Activated T-helper 2 cell treated with anti-CD3 and anti-CD28 coated beads, Interferon-gamma antibody, Interleukin-2, Interleukin-4, amounts not matched to agents 10 μg/mL and 5 μg/mL and 100 μg/mL, durations not matched to agents 14 hours and 24 hours and 36 hours (primary cell): ENCODE measurements at regions of chr2 and their contacts with region 1.

Region 1: GRCh38 chr2:76187415-76187814 is 476.7 kb upstream of the GCFC2 start:
- DNase-seq: no peak
- H3K4me3 Mint-ChIP-seq: no peak overlapping the region
- H3K27ac Mint-ChIP-seq: no peak overlapping the region
- H3K4me1 Mint-ChIP-seq: no peaks in the 10 kb centered on the region
- H3K27me3 Mint-ChIP-seq: no peaks in the 10 kb centered on the region

Region 2: GRCh38 chr2:76169276-76170008 is 18.0 kb before region 1 on chr2:
- intact Hi-C with region 1: no loop called
- DNase-seq: no peak
- H3K4me3 Mint-ChIP-seq: no peak overlapping the region
- H3K27ac Mint-ChIP-seq: no peak overlapping the region
- H3K4me1 Mint-ChIP-seq: no peaks in the 10 kb centered on the region
- H3K27me3 Mint-ChIP-seq: no peaks in the 10 kb centered on the region

Region 3: GRCh38 chr2:76211991-76212985 is 24.9 kb after region 1 on chr2:
- intact Hi-C with region 1: loop called (anchors 2 kb)
- DNase-seq: no peak
- H3K4me3 Mint-ChIP-seq: no peak overlapping the region
- H3K27ac Mint-ChIP-seq: no peak overlapping the region
- H3K4me1 Mint-ChIP-seq: no peaks in the 10 kb centered on the region
- H3K27me3 Mint-ChIP-seq: no peaks in the 10 kb centered on the region